H1 (cell line): ENCODE measurements at regions of chr2 and their contacts with region 1.

Region 1: DNA sequence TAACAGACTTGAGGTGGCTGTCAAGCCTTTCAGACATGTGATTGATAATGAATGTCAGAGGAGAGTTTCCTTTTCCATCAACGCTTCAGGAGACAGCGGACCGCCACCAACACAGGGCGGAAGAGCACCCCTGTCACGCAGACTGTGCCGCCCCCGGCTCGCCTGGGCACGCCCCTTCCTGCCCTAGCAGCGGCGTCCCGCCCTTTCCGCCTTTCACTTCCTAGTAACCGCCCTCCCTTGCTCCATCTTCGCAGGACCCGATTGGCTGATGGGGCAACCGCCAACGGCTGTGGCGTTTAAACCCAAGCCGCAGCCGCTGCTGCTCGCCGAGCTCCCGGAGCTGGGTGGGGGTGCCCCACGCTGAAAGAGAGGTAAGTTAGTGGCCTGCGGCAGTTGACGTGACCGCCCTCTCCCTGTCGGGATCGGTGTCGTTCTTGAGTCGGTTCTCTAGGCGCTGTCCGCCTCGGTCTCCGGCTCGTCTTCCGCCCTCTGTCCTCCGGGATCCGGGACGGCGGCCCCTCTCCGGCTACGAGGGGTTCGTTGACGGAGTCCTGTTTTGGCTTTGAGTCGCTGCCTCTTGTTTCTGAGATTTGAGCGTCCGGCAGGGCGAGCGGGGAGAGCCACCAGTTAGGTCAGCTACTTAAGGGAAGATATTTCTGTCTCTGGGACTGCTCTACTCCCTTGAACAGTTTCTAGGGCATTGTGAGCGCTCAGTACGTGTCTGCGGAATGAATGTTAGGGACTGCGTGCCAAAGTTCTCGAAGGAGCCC is at the start of gene SGO2:
- DNase-seq: peak; percentile 77 to 89
- H3K4me3 ChIP-seq: peak within 1 kb of the TSS; percentile 68 to 82 (median 80)
- H3K27ac ChIP-seq: no peak within 1 kb of the TSS
- H3K4me1 ChIP-seq: peaks cover 0 to 3% (median 1%) of the 10 kb centered on the region in 4 experiments; a peak in 5 of 7 replicates
- H3K27me3 ChIP-seq: peaks cover 0 to 5% (median 1%) of the 10 kb centered on the region in 4 experiments; a peak in 3 of 7 replicates
- CTCF ChIP-seq: peak in 2 of 3 experiments; percentile 9 to 21; a peak in 2 of 4 replicates
- EP300 ChIP-seq: no peak
- POLR2A ChIP-seq: no peak
- RAD21 ChIP-seq: peak in 1 of 2 experiments; percentile 13; a peak in 1 of 4 replicates
- total RNA-seq, gene SGO2: 29.0 and 33.2 TPM in 2 replicates

Region 2: DNA sequence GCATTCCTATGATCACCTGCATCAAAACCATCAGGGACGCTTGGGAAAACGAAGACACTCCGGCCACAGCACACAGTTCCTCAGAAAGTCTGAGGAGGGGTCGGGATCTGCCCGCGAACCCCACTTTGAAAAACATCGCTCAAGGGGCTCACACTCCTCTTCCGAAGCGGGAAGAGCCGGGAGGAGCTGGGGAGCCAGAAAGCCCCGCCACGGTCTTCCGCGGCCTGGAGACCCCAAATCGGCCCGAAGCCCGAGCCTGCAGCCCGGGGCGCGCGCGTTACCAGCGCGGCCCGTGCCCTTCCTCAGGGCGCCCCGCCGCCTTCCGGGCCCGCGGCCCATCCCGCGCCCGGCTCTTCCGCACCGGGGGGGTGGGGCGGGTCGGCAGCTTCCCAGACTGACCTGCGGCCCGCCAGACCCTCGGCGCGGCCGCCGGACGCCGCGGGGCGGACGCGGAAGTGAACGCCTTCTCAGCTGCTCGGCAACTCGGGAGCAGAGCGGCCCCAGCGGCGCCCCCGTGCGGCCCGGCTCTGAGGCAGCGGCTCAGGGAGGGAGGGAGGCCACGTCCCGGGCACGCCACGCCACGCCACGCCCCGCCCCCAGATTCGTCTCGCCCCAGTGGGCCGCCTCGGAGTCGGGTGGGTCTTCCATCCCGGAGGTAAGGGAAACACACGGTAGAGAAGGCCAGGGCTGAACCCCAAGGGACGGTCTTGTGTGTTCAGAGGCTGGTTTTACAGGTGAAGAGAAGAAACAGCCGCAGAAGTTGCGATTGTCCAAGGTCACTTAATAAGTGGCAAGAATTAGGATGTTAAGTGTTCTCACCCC is 16.2 kb before region 1 on chr2 and contains the start of gene KCTD18:
- CTCF ChIA-PET with region 1: interaction called, 29 read pairs
- POLR2A ChIA-PET with region 1: interaction called, 6 read pairs
- DNase-seq: peak; percentile 56 to 92
- H3K4me3 ChIP-seq: peak within 1 kb of the TSS; percentile 56 to 84 (median 73)
- H3K27ac ChIP-seq: no peak within 1 kb of the TSS
- H3K4me1 ChIP-seq: peaks cover 0 to 3% (median under 1%) of the 10 kb centered on the region in 4 experiments; a peak in 2 of 7 replicates
- H3K27me3 ChIP-seq: no peaks in the 10 kb centered on the region; a peak in 1 of 7 replicates
- CTCF ChIP-seq: peak; percentile 74 to 83 (median 75)
- EP300 ChIP-seq: peak in 1 of 2 experiments; percentile 19; a peak in 2 of 3 replicates
- POLR2A ChIP-seq: peak; percentile 33 to 63
- RAD21 ChIP-seq: peak; percentile 50 to 64; a peak in 3 of 4 replicates
- total RNA-seq, gene KCTD18: 3.1 and 3.3 TPM in 2 replicates